ENCODE measurements at regions of chr11 and their contacts with region 1.

Region 1: GRCh38 chr11:72369743-72370142 is 64.6 kb downstream of the CLPB start:
- DNase-seq: no peak
- ATAC-seq: no peak
- H3K4me3 ChIP-seq: no peak overlapping the region
- H3K27ac ChIP-seq: no peak overlapping the region
- H3K4me1 ChIP-seq: no peaks in the 10 kb centered on the region
- H3K27me3 ChIP-seq: no peaks in the 10 kb centered on the region
- CTCF ChIP-seq: no peak

Region 2: GRCh38 chr11:72222907-72223614 is 146.7 kb before region 1 on chr11:
- CTCF ChIA-PET with region 1: no interaction called
- POLR2A ChIA-PET with region 1: no interaction called
- intact Hi-C with region 1: no loop called
- DNase-seq: peak; percentile 96
- ATAC-seq: peak; percentile 78
- H3K4me3 ChIP-seq: peak overlapping the region; percentile 97
- H3K27ac ChIP-seq: peak overlapping the region; percentile 34
- H3K4me1 ChIP-seq: peaks cover 14% of the 10 kb centered on the region
- H3K27me3 ChIP-seq: peaks cover 7% of the 10 kb centered on the region; the same call in 1 of the 2 replicates
- CTCF ChIP-seq: no peak

Region 3: GRCh38 chr11:72278911-72279310 is 90.8 kb before region 1 on chr11:
- CTCF ChIA-PET with region 1: no interaction called
- POLR2A ChIA-PET with region 1: no interaction called
- intact Hi-C with region 1: no loop called
- DNase-seq: peak; percentile 62
- ATAC-seq: peak; percentile 50
- H3K4me3 ChIP-seq: no peak overlapping the region
- H3K27ac ChIP-seq: no peak overlapping the region
- H3K4me1 ChIP-seq: peaks cover 8% of the 10 kb centered on the region
- H3K27me3 ChIP-seq: no peaks in the 10 kb centered on the region
- CTCF ChIP-seq: no peak

Region 4: DNA sequence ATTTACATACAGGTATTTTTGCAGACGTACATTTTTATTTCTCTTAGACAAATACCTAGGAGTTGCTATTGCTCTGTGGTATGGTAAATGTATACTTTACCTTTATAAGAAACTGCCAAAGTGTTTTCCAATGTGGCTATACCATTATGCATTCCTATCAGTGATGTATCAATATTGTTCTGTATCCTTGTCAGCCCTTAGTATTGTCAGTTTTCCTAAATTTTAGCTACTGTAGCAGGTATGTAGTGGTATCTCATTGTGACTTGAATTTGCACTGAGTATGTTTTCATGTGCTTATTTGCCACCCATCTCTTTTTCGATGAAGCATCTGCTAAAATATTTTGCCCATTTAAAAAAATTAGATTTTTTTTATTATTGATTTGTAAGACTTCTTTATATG is 27.6 kb after region 1 on chr11:
- CTCF ChIA-PET with region 1: no interaction called
- POLR2A ChIA-PET with region 1: interaction called, 16 read pairs
- intact Hi-C with region 1: no loop called
- DNase-seq: no peak
- ATAC-seq: no peak
- H3K4me3 ChIP-seq: no peak overlapping the region
- H3K27ac ChIP-seq: no peak overlapping the region
- H3K4me1 ChIP-seq: no peaks in the 10 kb centered on the region
- H3K27me3 ChIP-seq: no peaks in the 10 kb centered on the region
- CTCF ChIP-seq: no peak